ENCODE measurements at regions of chr20 and their contacts with region 1.

Region 1: GRCh38 chr20:49567421-49568334 is at the start of gene PTGIS:
- DNase-seq: peak; percentile 40
- H3K4me3 ChIP-seq: peak within 1 kb of the TSS; percentile 29
- H3K4me3 Mint-ChIP-seq: peak within 1 kb of the TSS; percentile 7
- H3K27ac Mint-ChIP-seq: no peak within 1 kb of the TSS
- H3K4me1 ChIP-seq: peaks cover 9% of the 10 kb centered on the region
- H3K4me1 Mint-ChIP-seq: peaks cover 24% of the 10 kb centered on the region
- H3K27me3 ChIP-seq: no peaks in the 10 kb centered on the region
- H3K27me3 Mint-ChIP-seq: no peaks in the 10 kb centered on the region
- CTCF ChIP-seq: no peak
- total RNA-seq, gene PTGIS: 1.9 and 2.7 TPM in 2 replicates

Region 2: DNA sequence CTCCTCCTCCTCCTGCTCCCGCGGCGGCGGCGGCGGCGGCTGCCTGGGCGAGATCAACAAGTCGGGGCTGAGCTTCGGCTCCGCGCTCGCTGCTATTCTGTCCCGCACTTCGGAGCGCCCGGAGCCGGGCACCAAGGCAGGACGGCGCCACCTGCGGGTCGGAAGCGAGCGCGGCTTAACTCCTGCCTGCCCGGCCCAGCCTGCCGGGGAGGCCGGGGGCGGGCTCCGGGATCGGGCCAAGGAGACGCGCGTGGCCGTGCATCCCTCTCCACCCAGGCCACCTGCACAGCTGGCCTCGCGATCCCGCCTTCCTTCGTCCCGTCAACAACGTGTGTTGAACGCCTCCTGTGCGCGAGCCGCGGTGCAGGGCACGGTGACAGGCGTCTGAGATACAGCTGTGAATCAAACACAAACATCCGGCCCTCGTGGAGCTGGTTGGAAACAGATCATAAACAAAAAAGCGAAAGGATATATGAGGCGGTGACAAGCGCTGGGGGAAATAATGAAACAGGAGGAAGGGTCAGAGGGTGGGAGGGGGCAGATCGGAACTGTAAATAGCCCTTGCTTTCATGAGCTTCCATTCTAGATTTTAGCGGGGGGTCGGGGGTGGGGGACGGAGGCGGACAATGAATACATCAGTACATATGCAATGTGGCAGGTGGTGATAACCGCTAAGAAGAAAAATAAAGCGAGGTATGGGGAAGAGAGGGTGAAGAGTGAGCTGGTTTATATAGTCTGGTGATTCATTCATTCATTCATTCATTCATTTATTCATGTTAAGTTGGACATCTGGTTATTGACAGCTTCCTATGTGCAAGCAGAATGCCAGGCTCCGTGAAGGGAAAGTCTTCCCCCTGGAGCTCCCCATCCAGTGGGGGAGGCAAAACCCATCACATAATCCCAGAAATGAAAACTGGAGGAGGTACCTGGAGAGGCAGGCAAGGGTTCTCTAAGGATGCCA is 83.2 kb before region 1 on chr20:
- CTCF ChIA-PET with region 1: no interaction called
- POLR2A ChIA-PET with region 1: no interaction called
- intact Hi-C with region 1: no loop called
- DNase-seq: peak; percentile 91 to 95
- H3K4me3 ChIP-seq: peak overlapping the region; percentile 55
- H3K4me3 Mint-ChIP-seq: peak overlapping the region; percentile 68
- H3K27ac Mint-ChIP-seq: no peak overlapping the region
- H3K4me1 ChIP-seq: peaks cover 4% of the 10 kb centered on the region; the same call in 1 of the 2 replicates
- H3K4me1 Mint-ChIP-seq: peaks cover 8% of the 10 kb centered on the region
- H3K27me3 ChIP-seq: peaks cover 2% of the 10 kb centered on the region
- H3K27me3 Mint-ChIP-seq: peaks cover 34% of the 10 kb centered on the region
- CTCF ChIP-seq: peak; percentile 96 to 98

Region 3: DNA sequence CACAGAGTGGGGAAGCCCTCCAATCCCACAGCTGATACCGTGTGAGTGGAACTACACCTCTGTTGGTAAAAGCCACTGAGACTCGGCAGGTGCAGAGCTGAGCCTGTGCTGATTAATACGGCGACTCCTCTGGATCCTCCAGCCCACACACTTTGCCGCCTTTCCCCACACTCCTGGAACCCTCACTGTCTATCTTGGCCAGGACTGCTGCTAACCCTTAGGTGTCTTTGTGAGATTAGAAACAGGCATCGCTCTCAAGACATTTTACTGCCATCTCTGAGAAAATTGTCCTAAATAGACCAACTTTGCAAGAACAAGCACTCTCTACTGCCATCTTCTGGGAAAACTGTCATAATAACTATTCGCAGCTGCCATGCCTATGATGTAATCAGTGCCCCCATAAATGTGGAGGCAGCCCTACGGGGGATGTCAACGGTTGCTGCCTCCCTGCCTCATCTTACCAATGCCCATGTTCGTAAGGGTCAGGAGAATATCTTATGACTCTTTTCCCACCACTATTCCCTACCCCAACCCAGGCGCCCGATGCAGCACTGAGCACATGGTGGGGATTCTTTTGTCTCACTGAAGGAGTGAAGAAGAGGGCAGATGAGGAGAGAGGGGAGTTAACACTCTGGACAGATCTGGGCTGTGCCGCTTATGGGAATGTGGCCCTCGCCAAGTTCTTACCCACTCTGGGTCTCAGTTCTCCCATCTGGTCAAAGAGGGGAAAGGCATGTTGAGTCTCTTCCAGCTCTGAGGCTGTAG is 59.1 kb before region 1 on chr20:
- CTCF ChIA-PET with region 1: no interaction called
- POLR2A ChIA-PET with region 1: no interaction called
- intact Hi-C with region 1: no loop called
- DNase-seq: peak; percentile 46 to 73
- H3K4me3 ChIP-seq: no peak overlapping the region
- H3K4me3 Mint-ChIP-seq: no peak overlapping the region
- H3K27ac Mint-ChIP-seq: no peak overlapping the region
- H3K4me1 ChIP-seq: peaks cover 8% of the 10 kb centered on the region
- H3K4me1 Mint-ChIP-seq: no peaks in the 10 kb centered on the region
- H3K27me3 ChIP-seq: no peaks in the 10 kb centered on the region; the same call in 1 of the 2 replicates
- H3K27me3 Mint-ChIP-seq: peaks cover 7% of the 10 kb centered on the region
- CTCF ChIP-seq: peak; percentile 77 to 98

Region 4: DNA sequence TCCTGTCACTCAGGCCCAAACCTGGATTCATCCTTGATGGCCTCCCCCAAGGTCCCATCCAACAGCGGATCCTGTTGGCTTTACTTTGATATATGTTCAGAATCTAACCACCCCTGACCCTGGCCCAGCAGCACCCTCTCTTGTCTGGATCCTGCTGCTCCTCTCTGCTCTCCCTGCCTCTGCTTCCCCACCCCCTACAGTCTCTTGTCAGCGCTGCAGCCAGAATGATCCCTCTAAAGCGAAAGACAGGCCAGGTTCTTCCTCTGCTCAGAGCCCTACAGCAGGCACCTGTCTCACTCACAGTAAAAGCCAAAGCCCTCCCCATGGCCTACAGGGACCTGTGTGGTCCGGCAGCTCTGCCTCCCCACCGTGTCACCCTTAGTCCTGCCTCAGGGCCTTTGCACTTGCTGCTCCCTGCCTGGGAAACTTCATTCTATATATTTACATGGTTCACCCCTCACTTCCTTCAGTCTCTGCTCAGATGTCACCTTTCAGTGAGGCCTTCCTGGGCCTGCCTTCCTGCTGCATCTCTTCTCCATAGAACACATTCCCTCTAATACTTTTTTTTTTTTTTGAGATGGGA is 47.8 kb before region 1 on chr20:
- CTCF ChIA-PET with region 1: no interaction called
- POLR2A ChIA-PET with region 1: no interaction called
- intact Hi-C with region 1: no loop called
- DNase-seq: no peak
- H3K4me3 ChIP-seq: no peak overlapping the region
- H3K4me3 Mint-ChIP-seq: no peak overlapping the region
- H3K27ac Mint-ChIP-seq: no peak overlapping the region
- H3K4me1 ChIP-seq: no peaks in the 10 kb centered on the region
- H3K4me1 Mint-ChIP-seq: no peaks in the 10 kb centered on the region
- H3K27me3 ChIP-seq: peaks cover 2% of the 10 kb centered on the region
- H3K27me3 Mint-ChIP-seq: peaks cover 24% of the 10 kb centered on the region
- CTCF ChIP-seq: peak in 1 of 2 experiments; percentile 35

Region 5: DNA sequence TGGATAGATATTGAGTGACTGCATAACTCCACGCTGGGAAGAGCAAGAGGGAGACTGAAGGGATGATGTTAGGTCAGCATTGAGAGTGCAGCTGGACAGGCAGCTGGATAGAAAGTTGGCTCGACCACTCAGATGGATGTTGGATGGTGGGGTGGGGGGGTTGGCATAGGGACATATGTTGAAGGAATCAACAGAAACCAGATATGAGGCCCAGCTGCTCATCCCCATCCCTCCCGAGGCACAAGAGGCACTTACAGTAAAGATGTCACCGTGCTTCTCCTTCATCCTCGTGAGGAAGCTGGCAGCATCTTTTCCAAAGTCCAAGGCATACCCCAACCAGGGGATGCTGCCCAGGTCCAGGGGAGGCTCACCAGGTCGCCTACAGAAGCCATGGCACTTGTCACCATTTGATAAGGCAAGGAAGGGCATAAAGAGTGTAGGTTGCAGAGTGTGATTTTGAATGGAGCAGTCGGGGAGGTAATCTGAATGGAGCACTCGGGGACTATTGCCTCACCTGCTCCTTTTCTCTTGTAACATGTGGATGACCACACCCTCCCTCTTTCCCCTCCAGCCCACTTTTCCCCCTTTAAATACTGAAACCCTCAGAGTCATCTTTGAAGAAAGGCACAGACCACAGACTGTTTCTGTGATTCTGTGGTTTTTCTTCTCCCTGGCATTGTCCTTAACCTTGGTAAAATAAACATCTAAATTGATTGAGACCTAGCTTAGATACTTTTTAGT is 17.7 kb before region 1 on chr20:
- CTCF ChIA-PET with region 1: no interaction called
- POLR2A ChIA-PET with region 1: no interaction called
- intact Hi-C with region 1: loop called (anchors 2 kb)
- DNase-seq: peak in 1 of 2 experiments; percentile 32
- H3K4me3 ChIP-seq: no peak overlapping the region
- H3K4me3 Mint-ChIP-seq: no peak overlapping the region
- H3K27ac Mint-ChIP-seq: no peak overlapping the region
- H3K4me1 ChIP-seq: peaks cover 34% of the 10 kb centered on the region
- H3K4me1 Mint-ChIP-seq: peaks cover 16% of the 10 kb centered on the region
- H3K27me3 ChIP-seq: no peaks in the 10 kb centered on the region
- H3K27me3 Mint-ChIP-seq: no peaks in the 10 kb centered on the region
- CTCF ChIP-seq: no peak

Measured in Caco-2 (cell line).